ENCODE measurements at regions of chr11 and their contacts with region 1.

Region 1: GRCh38 chr11:449880-450808 is at the start of gene PTDSS2:
- DNase-seq: peak; percentile 97
- H3K4me3 ChIP-seq: peak within 1 kb of the TSS; percentile 79 to 98 (median 93)
- H3K27ac ChIP-seq: peak within 1 kb of the TSS; percentile 72 to 96 (median 92)
- H3K4me1 ChIP-seq: peaks cover 21 to 22% of the 10 kb centered on the region in 2 donors
- H3K27me3 ChIP-seq: no peaks in the 10 kb centered on the region
- CTCF ChIP-seq: peak in 1 of 6 experiments; percentile 22
- POLR2A ChIP-seq: peak in 1 of 2 donors; percentile 88
- total RNA-seq, gene PTDSS2: 40.8 to 69.9 (median 41.7) TPM

Region 2: GRCh38 chr11:506238-506994 is 56.3 kb after region 1 on chr11:
- intact Hi-C with region 1: loop called (anchors 5 kb)
- DNase-seq: peak; percentile 97 to 98
- H3K4me3 ChIP-seq: peak overlapping the region; percentile 77 to 94 (median 89)
- H3K27ac ChIP-seq: peak overlapping the region; percentile 97 to 99 (median 97)
- H3K4me1 ChIP-seq: peaks cover 31 to 44% of the 10 kb centered on the region in 2 donors
- H3K27me3 ChIP-seq: no peaks in the 10 kb centered on the region
- CTCF ChIP-seq: peak in 1 of 6 experiments; percentile 6
- POLR2A ChIP-seq: peak; percentile 43 to 78